WTC11 (cell line): ENCODE measurements at regions of chr20 and their contacts with region 1.

Region 1: DNA sequence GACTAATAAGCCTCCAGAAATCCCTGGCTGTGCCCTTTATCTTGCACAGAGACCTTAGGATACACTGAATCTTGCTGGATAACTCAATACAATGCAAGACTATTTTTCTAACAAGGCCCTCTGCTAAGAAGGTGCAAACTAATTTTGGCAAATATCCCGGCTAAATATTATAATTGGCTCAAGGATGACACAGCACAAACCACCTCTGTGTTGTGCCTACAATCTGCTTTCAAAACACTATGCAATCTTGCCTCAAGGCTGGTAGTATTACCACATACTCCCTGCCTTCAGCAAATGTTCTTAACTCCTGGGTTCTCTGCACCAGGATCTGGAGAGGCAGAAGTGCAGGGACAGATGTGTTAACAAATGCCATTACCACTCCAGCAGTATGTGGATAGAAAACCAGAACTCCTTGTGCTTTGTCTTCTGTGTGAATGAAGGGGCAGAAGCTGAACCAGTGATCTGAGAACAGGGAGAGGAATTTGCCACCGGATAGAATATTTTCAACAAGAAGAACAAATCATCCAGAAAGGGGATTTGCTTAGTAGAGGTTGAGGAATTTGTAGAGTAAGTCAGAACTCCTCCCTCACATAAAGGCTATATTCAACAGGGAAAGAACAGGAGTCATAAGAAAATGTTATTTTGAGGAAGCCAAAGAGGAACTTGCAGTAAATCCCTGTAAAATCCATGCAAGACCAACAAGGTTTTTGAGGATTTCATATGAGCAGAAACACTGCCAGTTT is 74.1 kb upstream of the SLC4A11 start:
- DNase-seq: no peak
- ATAC-seq: no peak
- H3K4me3 Mint-ChIP-seq: no peak overlapping the region
- H3K27ac Mint-ChIP-seq: no peak overlapping the region
- H3K4me1 Mint-ChIP-seq: no peaks in the 10 kb centered on the region
- H3K27me3 Mint-ChIP-seq: no peaks in the 10 kb centered on the region
- CTCF ChIP-seq: no peak

Region 2: DNA sequence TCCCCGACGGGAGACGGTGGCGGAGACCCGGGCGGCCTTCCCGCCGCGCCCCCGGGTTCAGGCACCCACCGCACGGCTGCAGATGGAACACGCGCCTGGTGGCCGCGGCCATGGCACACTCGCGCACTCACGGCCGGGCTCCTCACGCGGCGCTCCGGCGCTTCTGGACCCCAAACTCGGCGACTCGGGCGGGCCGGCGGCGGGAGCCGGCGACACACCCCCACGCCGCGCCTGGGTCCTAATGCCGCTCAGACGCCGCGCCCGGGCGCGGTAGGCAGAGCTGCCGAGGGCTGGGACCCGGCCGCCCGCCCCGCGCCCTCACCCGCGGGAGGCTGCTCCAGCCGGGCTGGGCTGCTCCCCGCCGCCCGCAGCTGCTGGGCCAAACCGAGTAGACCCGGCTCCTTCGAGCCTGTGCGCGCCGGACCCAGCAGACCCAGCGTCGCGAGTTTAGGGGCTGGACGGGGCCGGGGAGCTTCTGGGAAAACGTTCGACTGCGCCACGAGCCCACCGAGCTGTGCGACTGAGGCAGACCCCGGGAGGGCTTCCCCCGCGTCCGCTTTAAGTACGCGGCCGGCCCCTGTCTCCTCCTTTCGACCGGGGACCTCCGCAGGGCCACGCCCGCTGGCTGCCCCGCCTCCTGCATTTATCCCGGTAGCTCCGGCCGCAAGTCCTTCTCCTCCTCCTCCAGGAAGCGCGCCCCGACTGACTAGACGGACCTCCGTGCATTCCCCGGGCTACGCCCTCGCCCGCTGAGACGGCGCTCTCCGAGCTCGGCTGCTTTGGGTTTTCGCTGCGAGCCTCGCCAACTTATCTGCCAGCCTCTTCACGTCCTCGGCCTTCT is 73.9 kb before region 1 on chr20 and contains the start of gene SLC4A11:
- CTCF ChIA-PET with region 1: interaction called, 26 read pairs
- POLR2A ChIA-PET with region 1: no interaction called
- DNase-seq: peak; percentile 82
- ATAC-seq: peak; percentile 63
- H3K4me3 Mint-ChIP-seq: peak within 1 kb of the TSS; percentile 95
- H3K27ac Mint-ChIP-seq: no peak within 1 kb of the TSS; the same call in 1 of the 2 replicates
- H3K4me1 Mint-ChIP-seq: peaks cover 26% of the 10 kb centered on the region
- H3K27me3 Mint-ChIP-seq: peaks cover 56% of the 10 kb centered on the region
- CTCF ChIP-seq: no peak
- total RNA-seq, gene SLC4A11: 30.4 to 39.5 TPM (median 34.5 TPM) in 3 replicates